B cell (primary cell): ENCODE measurements at regions of chr2 and their contacts with region 1.

Region 1: GRCh38 chr2:231482806-231483391 is 18.6 kb upstream of the NCL start:
- DNase-seq: peak; percentile 82
- ATAC-seq: peak; percentile 85
- H3K4me3 ChIP-seq: peak overlapping the region in 4 of 5 experiments; percentile 58 to 65 (median 59)
- H3K4me3 Mint-ChIP-seq: peak overlapping the region; percentile 83
- H3K27ac ChIP-seq: peak overlapping the region; percentile 71 to 75
- H3K27ac Mint-ChIP-seq: peak overlapping the region; percentile 86
- H3K4me1 ChIP-seq: peaks cover 0 to 19% of the 10 kb centered on the region in 2 donors
- H3K4me1 Mint-ChIP-seq: peaks cover 7% of the 10 kb centered on the region
- H3K27me3 ChIP-seq: no peaks in the 10 kb centered on the region
- H3K27me3 Mint-ChIP-seq: no peaks in the 10 kb centered on the region
- CTCF ChIP-seq: peak; percentile 91

Region 2: DNA sequence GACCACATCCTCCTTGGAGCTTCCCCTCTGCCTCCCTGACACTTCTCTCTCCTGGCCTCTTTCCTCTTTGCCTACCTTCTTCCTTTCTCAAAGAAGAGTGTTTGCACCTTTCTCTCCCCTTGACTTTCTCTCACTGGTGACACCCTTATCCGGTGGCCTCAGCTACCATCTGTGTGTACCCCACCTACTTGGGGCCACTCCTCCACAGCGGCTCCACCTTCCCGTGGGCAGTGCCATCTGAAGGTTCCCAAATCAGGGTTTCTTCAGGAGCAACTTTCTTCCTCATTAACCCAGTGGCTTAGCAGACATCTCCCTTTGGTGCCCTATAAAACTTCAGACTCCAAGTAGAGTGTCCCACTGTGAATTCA is 13.3 kb before region 1 on chr2:
- CTCF ChIA-PET with region 1: interaction called, 34 read pairs
- POLR2A ChIA-PET with region 1: interaction called, 14 read pairs
- intact Hi-C with region 1: loop called (anchors 1 kb)
- DNase-seq: no peak
- ATAC-seq: no peak
- H3K4me3 ChIP-seq: no peak overlapping the region
- H3K4me3 Mint-ChIP-seq: no peak overlapping the region
- H3K27ac ChIP-seq: no peak overlapping the region
- H3K27ac Mint-ChIP-seq: no peak overlapping the region
- H3K4me1 ChIP-seq: peaks cover 5 to 7% of the 10 kb centered on the region in 2 donors
- H3K4me1 Mint-ChIP-seq: peaks cover 5% of the 10 kb centered on the region
- H3K27me3 ChIP-seq: no peaks in the 10 kb centered on the region
- H3K27me3 Mint-ChIP-seq: no peaks in the 10 kb centered on the region
- CTCF ChIP-seq: no peak

Region 3: DNA sequence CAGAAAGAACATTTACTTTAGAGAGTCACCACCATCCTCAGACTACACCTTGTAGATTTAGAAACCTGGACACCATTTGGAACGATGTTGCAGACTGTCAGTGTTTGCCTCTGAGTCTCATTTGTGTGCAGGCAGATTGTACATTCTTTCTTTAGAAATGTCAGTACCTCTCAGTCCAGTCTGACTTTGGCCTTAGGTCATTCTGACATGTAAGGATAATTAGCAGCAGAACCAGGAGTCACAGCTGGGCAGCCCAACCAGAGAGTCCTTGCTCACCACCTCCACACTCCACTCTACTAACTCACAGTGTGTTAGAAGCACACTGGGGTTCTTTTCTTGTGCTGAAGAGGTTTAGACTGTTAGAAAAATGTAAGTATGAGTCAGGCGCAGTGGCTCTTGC is 36.5 kb after region 1 on chr2:
- CTCF ChIA-PET with region 1: interaction called, 24 read pairs
- POLR2A ChIA-PET with region 1: no interaction called
- intact Hi-C with region 1: loop called (anchors 1 kb)
- DNase-seq: no peak
- ATAC-seq: no peak
- H3K4me3 ChIP-seq: no peak overlapping the region
- H3K4me3 Mint-ChIP-seq: no peak overlapping the region
- H3K27ac ChIP-seq: no peak overlapping the region
- H3K27ac Mint-ChIP-seq: no peak overlapping the region
- H3K4me1 ChIP-seq: peaks cover 5 to 16% of the 10 kb centered on the region in 2 donors
- H3K4me1 Mint-ChIP-seq: peaks cover 10% of the 10 kb centered on the region
- H3K27me3 ChIP-seq: no peaks in the 10 kb centered on the region
- H3K27me3 Mint-ChIP-seq: peaks cover under 1% of the 10 kb centered on the region
- CTCF ChIP-seq: no peak

Region 4: DNA sequence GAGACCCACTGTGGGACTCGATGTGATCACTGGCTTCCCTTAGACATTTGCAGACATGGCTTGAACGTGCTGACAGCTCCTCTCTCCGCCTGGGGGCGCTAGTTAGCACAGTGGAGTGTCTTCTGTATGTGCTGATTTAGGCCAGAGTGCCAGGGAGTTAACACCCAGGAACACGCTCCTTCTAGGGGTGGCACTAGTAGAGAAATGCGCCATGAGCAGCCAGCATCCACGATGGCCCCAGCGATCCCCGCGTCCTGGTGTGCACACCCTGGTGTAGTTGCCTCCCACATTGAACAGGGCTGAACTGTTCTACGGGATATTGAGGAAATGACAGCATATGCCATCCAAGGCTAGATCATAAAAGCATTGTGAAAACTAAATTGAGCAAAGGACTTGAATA is 58.7 kb after region 1 on chr2:
- CTCF ChIA-PET with region 1: no interaction called
- POLR2A ChIA-PET with region 1: no interaction called
- intact Hi-C with region 1: no loop called
- DNase-seq: no peak
- ATAC-seq: no peak
- H3K4me3 ChIP-seq: no peak overlapping the region
- H3K4me3 Mint-ChIP-seq: no peak overlapping the region
- H3K27ac ChIP-seq: no peak overlapping the region
- H3K27ac Mint-ChIP-seq: no peak overlapping the region
- H3K4me1 ChIP-seq: peaks cover 17 to 26% of the 10 kb centered on the region in 2 donors
- H3K4me1 Mint-ChIP-seq: peaks cover 19% of the 10 kb centered on the region
- H3K27me3 ChIP-seq: no peaks in the 10 kb centered on the region
- H3K27me3 Mint-ChIP-seq: peaks cover 9% of the 10 kb centered on the region
- CTCF ChIP-seq: no peak

Region 5: DNA sequence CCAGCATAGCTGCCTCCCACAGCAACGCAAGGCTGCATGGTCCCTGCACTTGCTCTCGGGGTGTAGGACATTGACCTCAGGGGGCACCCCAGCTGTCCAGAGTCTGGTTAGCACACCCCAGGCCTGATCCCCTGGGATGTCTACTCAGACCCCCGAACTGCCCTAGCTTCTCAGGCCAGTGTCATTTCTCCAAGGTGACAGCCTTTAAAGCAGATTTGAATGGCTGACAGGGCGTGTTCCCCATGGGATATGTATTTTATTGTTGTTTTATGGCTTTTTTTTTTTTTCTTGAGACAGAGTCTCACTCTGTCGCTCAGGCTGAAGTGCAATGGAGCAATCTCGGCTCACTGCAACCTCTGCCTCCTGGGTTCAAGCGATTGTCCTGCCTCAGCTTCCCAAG is 184.6 kb after region 1 on chr2:
- CTCF ChIA-PET with region 1: no interaction called
- POLR2A ChIA-PET with region 1: no interaction called
- intact Hi-C with region 1: no loop called
- DNase-seq: peak; percentile 57
- ATAC-seq: no peak
- H3K4me3 ChIP-seq: peak overlapping the region in 4 of 5 experiments; percentile 36 to 61 (median 46)
- H3K4me3 Mint-ChIP-seq: peak overlapping the region; percentile 92
- H3K27ac ChIP-seq: peak overlapping the region; percentile 93 to 98
- H3K27ac Mint-ChIP-seq: peak overlapping the region; percentile 100
- H3K4me1 ChIP-seq: peaks cover 79 to 96% of the 10 kb centered on the region in 2 donors
- H3K4me1 Mint-ChIP-seq: peaks cover 81% of the 10 kb centered on the region
- H3K27me3 ChIP-seq: no peaks in the 10 kb centered on the region
- H3K27me3 Mint-ChIP-seq: no peaks in the 10 kb centered on the region
- CTCF ChIP-seq: no peak